ENCODE measurements at regions of chr12 and their contacts with region 1.

Region 1: GRCh38 chr12:56636675-56637540 is 6.8 kb upstream of the BAZ2A start:
- DNase-seq: peak; percentile 98 to 100
- ATAC-seq: peak; percentile 81 to 92 (median 87)
- H3K4me3 ChIP-seq: peak overlapping the region in 9 of 10 donors; percentile 54 to 94 (median 75)
- H3K27ac ChIP-seq: peak overlapping the region; percentile 81 to 97 (median 94)
- H3K4me1 ChIP-seq: peaks cover 16 to 93% (median 63%) of the 10 kb centered on the region in 9 donors
- H3K27me3 ChIP-seq: no peaks in the 10 kb centered on the region
- CTCF ChIP-seq: peak; percentile 48 to 85 (median 71)

Region 2: DNA sequence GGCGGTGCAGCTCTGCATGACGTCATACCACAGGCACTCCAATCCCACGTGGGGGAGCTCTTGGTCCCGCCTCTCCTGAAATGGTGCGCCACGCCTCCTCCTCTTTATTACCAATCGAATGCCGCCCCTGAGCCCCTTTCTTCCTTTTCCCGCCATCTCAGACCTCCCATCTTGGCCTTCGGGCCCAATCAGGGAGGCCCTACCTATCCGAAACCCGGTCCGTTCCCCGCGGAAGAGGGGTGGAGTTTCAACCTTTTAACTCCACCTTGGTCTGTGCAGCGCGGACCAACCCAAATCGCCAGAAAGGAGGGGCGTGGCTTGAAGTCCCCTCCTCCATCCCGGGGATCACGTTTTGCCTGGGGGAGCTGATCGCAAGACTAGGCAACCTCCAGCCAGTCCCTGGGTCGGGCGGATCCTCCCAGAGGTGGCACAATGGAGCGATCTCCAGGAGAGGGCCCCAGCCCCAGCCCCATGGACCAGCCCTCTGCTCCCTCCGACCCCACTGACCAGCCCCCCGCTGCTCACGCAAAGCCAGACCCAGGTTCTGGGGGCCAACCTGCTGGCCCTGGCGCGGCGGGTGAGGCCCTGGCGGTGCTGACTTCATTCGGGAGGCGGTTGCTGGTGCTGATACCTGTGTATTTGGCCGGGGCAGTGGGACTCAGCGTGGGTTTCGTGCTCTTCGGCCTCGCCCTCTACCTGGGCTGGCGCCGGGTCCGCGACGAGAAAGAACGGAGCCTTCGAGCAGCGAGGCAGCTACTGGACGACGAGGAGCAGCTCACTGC is 508.8 kb before region 1 on chr12 and contains the start of gene ESYT1:
- intact Hi-C with region 1: loop called in 1 of 10 experiments (anchors 10 kb)
- DNase-seq: peak; percentile 95 to 99
- ATAC-seq: peak; percentile 94 to 97 (median 96)
- H3K4me3 ChIP-seq: peak within 1 kb of the TSS; percentile 53 to 94 (median 84)
- H3K27ac ChIP-seq: peak within 1 kb of the TSS; percentile 51 to 94 (median 88)
- H3K4me1 ChIP-seq: peaks cover 8 to 61% (median 44%) of the 10 kb centered on the region in 9 donors
- H3K27me3 ChIP-seq: no peaks in the 10 kb centered on the region
- CTCF ChIP-seq: peak in 1 of 9 donors; percentile 18
- total RNA-seq, gene ESYT1: 28.8 to 47.5 (median 31.9) TPM

Region 3: DNA sequence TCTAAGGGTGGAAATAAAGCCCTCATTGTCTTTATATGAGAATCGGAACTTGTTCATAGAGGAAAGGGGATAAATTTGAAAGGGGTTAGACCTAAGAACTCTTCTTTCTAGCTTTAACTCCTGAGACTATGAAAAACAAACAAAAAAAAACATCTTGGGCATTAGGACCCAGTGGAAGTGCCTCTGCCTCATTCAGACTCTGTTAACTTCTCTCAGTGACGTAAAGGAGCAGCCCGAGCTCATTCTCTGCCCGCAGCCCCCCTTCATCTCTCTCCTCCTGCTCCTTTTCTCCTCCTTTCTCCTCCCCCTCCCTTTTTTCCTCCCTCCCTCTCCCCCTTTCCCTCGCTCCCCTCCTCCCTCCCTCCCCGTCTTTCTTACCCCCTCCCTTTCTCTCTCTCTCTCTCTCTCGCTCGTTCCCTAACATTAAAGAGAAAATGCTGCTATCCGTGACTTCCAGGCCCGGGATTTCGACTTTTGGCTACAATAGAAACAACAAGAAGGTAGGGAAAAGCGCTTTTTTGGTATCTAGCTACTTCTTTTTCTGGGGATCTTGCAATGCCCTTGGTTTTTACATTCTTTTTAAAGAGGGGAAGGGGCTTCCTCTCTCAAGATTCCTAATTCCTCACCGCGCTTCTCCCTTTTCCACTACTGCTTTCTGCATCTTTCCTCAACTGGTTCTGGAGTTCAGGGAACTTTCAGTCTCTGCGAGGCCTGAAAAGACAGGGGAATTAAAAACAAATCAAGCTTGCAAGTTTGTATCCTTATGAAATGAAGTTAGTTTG is 115.1 kb before region 1 on chr12 and contains the start of gene RBMS2:
- intact Hi-C with region 1: loop called in 6 of 10 experiments (anchors 2 to 10 kb)
- DNase-seq: peak; percentile 68 to 91
- ATAC-seq: peak; percentile 91 to 97 (median 94)
- H3K4me3 ChIP-seq: peak within 1 kb of the TSS; percentile 45 to 74 (median 64)
- H3K27ac ChIP-seq: peak within 1 kb of the TSS; percentile 83 to 97 (median 91)
- H3K4me1 ChIP-seq: peaks cover 7 to 71% (median 53%) of the 10 kb centered on the region in 9 donors
- H3K27me3 ChIP-seq: no peaks in the 10 kb centered on the region
- CTCF ChIP-seq: no peak
- total RNA-seq, gene RBMS2: 24.5 to 39.6 (median 31.5) TPM

Region 4: GRCh38 chr12:56571126-56571525 is 65.8 kb before region 1 on chr12:
- intact Hi-C with region 1: loop called in 2 of 10 experiments (anchors 5 to 10 kb)
- DNase-seq: no peak
- ATAC-seq: peak in 5 of 8 donors; percentile 13 to 52 (median 36)
- H3K4me3 ChIP-seq: no peak overlapping the region
- H3K27ac ChIP-seq: peak overlapping the region in 8 of 10 donors; percentile 3 to 90 (median 64)
- H3K4me1 ChIP-seq: peaks cover 6 to 59% (median 38%) of the 10 kb centered on the region in 9 donors
- H3K27me3 ChIP-seq: no peaks in the 10 kb centered on the region
- CTCF ChIP-seq: no peak

Region 5: GRCh38 chr12:56593909-56594621 is 42.8 kb before region 1 on chr12:
- intact Hi-C with region 1: loop called in 1 of 10 experiments (anchors 5 kb)
- DNase-seq: peak in 1 of 2 donors; percentile 32
- ATAC-seq: peak; percentile 42 to 77 (median 69)
- H3K4me3 ChIP-seq: no peak overlapping the region
- H3K27ac ChIP-seq: peak overlapping the region in 7 of 10 donors; percentile 17 to 67 (median 54)
- H3K4me1 ChIP-seq: peaks cover 3 to 25% (median 11%) of the 10 kb centered on the region in 9 donors
- H3K27me3 ChIP-seq: no peaks in the 10 kb centered on the region
- CTCF ChIP-seq: peak; percentile 50 to 81 (median 66)

Region 6: DNA sequence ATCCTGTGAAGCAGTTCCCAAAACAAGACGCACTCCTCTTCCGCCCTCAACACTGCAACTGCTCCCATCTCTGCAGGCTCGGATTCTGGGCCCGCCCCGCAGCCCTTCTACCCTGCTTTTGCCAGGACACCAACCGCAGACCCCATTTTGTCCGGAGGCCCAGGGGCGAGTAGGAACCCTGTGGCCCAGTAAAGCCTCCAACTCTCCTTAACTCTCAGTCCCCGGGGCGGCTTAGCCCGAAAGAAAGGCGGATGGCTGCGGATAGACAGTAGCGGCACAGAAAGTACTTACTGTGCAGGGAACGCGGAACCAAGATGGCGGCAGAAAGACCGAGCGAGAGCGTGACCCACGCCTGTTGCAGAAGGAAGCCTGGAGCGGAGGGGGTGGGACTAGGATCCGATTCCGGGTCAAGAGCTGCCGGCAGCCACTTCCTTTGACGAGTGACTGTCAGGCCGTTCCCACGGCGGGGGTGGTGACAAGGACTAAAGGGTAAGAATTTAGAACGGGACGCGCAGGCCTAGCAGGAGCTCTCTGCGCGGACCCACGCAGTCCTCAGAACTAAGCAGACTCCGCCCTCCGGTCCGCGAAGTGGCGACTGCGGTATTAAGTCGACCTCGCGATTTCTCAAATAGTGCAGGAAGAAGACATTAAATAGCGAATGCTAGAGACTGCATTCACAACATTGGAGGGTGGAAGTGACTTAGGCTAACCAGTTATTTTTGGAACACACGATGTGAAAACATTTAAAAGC is 88.2 kb after region 1 on chr12 and contains the start of gene NACA:
- intact Hi-C with region 1: loop called in 3 of 10 experiments (anchors 5 to 10 kb)
- DNase-seq: peak; percentile 97 to 99
- ATAC-seq: peak; percentile 96 to 99 (median 98)
- H3K4me3 ChIP-seq: peak within 1 kb of the TSS; percentile 71 to 99 (median 82)
- H3K27ac ChIP-seq: peak within 1 kb of the TSS; percentile 83 to 96 (median 92)
- H3K4me1 ChIP-seq: peaks cover 19 to 49% (median 43%) of the 10 kb centered on the region in 9 donors
- H3K27me3 ChIP-seq: no peaks in the 10 kb centered on the region
- CTCF ChIP-seq: no peak
- total RNA-seq, gene NACA: 476 to 727 (median 613) TPM